CD4-positive, alpha-beta memory T cell (primary cell): ENCODE measurements at regions of chr1 and their contacts with region 1.

Region 1: GRCh38 chr1:161225534-161226319 is at the start of gene TOMM40L:
- DNase-seq: peak; percentile 85 to 97 (median 95)
- H3K4me3 ChIP-seq: peak within 1 kb of the TSS; percentile 67 to 91
- H3K4me3 Mint-ChIP-seq: peak within 1 kb of the TSS; percentile 96 to 100 (median 98)
- H3K27ac ChIP-seq: peak within 1 kb of the TSS; percentile 63
- H3K27ac Mint-ChIP-seq: peak within 1 kb of the TSS; percentile 89 to 98 (median 97)
- H3K4me1 ChIP-seq: peaks cover 28% of the 10 kb centered on the region
- H3K4me1 Mint-ChIP-seq: peaks cover 20 to 37% (median 29%) of the 10 kb centered on the region in 4 donors
- H3K27me3 ChIP-seq: no peaks in the 10 kb centered on the region
- H3K27me3 Mint-ChIP-seq: no peaks in the 10 kb centered on the region
- total RNA-seq, gene TOMM40L: 8.2 to 8.8 TPM

Region 2: GRCh38 chr1:161153679-161154426 is 71.9 kb before region 1 on chr1 and contains the start of gene UFC1:
- CTCF ChIA-PET with region 1: interaction called, 9 read pairs
- POLR2A ChIA-PET with region 1: interaction called, 15 read pairs
- intact Hi-C with region 1: no loop called
- DNase-seq: peak; percentile 87 to 93 (median 90)
- H3K4me3 ChIP-seq: peak within 1 kb of the TSS; percentile 37 to 100
- H3K4me3 Mint-ChIP-seq: peak within 1 kb of the TSS; percentile 96 to 100 (median 99)
- H3K27ac ChIP-seq: peak within 1 kb of the TSS; percentile 99
- H3K27ac Mint-ChIP-seq: peak within 1 kb of the TSS; percentile 99 to 100 (median 100)
- H3K4me1 ChIP-seq: peaks cover 23% of the 10 kb centered on the region
- H3K4me1 Mint-ChIP-seq: peaks cover 23 to 46% (median 32%) of the 10 kb centered on the region in 4 donors
- H3K27me3 ChIP-seq: no peaks in the 10 kb centered on the region
- H3K27me3 Mint-ChIP-seq: no peaks in the 10 kb centered on the region
- total RNA-seq, gene UFC1: 87.2 to 87.4 TPM

Region 3: DNA sequence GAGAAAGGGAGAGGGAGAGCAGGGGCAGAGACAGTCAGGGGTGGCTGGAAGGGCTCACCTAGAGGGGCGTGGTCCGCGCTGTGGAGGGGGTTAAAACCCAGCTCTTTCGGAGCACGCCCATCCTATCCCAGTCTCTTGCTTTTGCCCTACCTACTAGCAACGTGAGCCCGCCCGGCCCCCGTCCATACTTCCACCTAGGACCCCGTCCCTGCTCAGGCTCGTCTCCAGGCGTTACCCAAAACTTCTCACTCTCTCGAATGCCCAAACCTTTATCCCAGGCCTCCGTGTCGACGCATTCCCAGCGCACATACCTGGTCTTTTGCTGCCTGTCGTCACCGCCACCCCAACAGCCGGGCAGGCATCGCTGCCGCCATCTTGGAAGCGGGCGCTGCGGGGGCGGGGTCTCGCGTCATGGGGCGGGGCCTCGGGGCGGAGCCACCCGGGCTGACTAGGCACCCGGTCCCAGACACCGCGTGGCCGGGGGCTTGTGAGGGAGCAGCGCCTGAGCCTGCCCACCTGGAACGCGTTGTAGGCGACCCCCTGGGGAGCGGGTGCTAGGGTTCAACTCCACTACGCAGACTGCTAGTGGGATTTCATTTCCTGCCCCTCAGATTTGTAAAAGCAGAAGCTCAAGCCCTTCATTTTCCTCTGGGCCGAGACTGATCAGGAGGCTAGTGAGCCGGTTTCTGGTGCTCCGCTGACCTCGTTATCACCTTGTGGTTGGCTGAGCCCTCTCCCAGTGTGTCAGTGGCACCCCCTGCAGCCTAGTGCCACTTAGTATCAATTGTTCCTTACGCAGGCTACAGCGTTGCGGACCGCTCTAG is 48.4 kb before region 1 on chr1 and contains the start of gene B4GALT3:
- CTCF ChIA-PET with region 1: interaction called, 106 read pairs
- POLR2A ChIA-PET with region 1: interaction called, 54 read pairs
- intact Hi-C with region 1: loop called (anchors 1 kb)
- DNase-seq: peak; percentile 89 to 94 (median 90)
- H3K4me3 ChIP-seq: peak within 1 kb of the TSS; percentile 90 to 97
- H3K4me3 Mint-ChIP-seq: peak within 1 kb of the TSS; percentile 98 to 100 (median 100)
- H3K27ac ChIP-seq: peak within 1 kb of the TSS; percentile 85
- H3K27ac Mint-ChIP-seq: peak within 1 kb of the TSS; percentile 95 to 100 (median 99)
- H3K4me1 ChIP-seq: peaks cover 56% of the 10 kb centered on the region
- H3K4me1 Mint-ChIP-seq: peaks cover 45 to 85% (median 68%) of the 10 kb centered on the region in 4 donors
- H3K27me3 ChIP-seq: no peaks in the 10 kb centered on the region
- H3K27me3 Mint-ChIP-seq: no peaks in the 10 kb centered on the region
- total RNA-seq, gene B4GALT3: 64.6 to 71.5 TPM

Region 4: GRCh38 chr1:161201828-161202725 is 23.6 kb before region 1 on chr1 and contains the start of gene NDUFS2:
- CTCF ChIA-PET with region 1: interaction called, 131 read pairs
- POLR2A ChIA-PET with region 1: interaction called, 112 read pairs
- intact Hi-C with region 1: loop called (anchors 1 kb)
- DNase-seq: peak; percentile 91 to 98 (median 94)
- H3K4me3 ChIP-seq: peak within 1 kb of the TSS; percentile 85 to 98
- H3K4me3 Mint-ChIP-seq: peak within 1 kb of the TSS; percentile 95 to 98 (median 96)
- H3K27ac ChIP-seq: peak within 1 kb of the TSS; percentile 96
- H3K27ac Mint-ChIP-seq: peak within 1 kb of the TSS; percentile 94 to 99 (median 99)
- H3K4me1 ChIP-seq: peaks cover 66% of the 10 kb centered on the region
- H3K4me1 Mint-ChIP-seq: peaks cover 32 to 68% (median 56%) of the 10 kb centered on the region in 4 donors
- H3K27me3 ChIP-seq: no peaks in the 10 kb centered on the region
- H3K27me3 Mint-ChIP-seq: peaks cover 0 to 1% of the 10 kb centered on the region in 2 donors
- total RNA-seq, gene NDUFS2: 89.9 to 100 TPM

Region 5: GRCh38 chr1:161305867-161306519 is 80.3 kb after region 1 on chr1:
- CTCF ChIA-PET with region 1: interaction called, 42 read pairs
- POLR2A ChIA-PET with region 1: interaction called, 29 read pairs
- intact Hi-C with region 1: loop called (anchors 1 kb)
- DNase-seq: peak; percentile 89 to 92 (median 90)
- H3K4me3 ChIP-seq: peak overlapping the region; percentile 48 to 86
- H3K4me3 Mint-ChIP-seq: peak overlapping the region; percentile 89 to 100 (median 97)
- H3K27ac ChIP-seq: peak overlapping the region; percentile 77
- H3K27ac Mint-ChIP-seq: peak overlapping the region; percentile 91 to 99 (median 96)
- H3K4me1 ChIP-seq: peaks cover 29% of the 10 kb centered on the region
- H3K4me1 Mint-ChIP-seq: peaks cover 17 to 41% (median 29%) of the 10 kb centered on the region in 4 donors
- H3K27me3 ChIP-seq: no peaks in the 10 kb centered on the region
- H3K27me3 Mint-ChIP-seq: no peaks in the 10 kb centered on the region

Region 6: DNA sequence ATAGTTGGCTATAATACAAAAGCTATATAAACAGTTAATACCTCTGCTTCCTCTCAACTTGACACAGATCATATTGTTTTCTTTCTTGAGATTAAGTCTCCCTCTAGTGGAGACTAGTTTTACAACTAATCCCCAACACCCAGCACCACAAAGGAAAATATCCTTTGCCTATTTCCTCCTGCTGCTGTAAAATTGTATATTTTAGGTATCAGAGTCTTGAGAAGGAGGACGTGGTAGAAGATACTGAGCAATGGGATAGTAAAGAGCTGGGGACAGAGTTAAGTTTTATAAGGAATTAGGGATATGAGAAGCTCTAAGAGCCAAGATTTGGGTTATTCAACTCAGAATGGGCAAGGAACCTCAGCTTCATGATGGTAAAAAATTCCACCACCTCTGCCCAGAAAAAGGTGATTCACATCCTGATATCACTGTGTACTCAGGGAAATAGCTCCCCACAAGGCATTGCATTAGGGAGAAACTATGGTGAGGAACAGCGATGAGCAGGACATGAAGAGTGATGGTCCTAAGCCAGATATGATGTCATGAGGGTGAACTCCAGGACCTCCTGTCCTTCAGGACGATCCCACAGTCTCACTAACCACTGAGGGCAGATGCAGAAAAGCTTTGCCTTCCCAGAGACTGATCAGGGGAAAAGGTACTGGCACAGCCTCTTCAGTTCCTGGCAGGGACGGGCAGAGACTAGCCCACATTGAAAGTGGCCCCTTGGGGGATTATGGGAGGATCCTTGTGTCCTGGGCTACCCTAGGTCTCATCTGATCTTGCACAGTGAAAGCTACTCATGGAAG is 156.7 kb after region 1 on chr1:
- CTCF ChIA-PET with region 1: interaction called, 245 read pairs
- POLR2A ChIA-PET with region 1: interaction called, 5 read pairs
- intact Hi-C with region 1: loop called (anchors 1 kb)
- DNase-seq: peak in 4 of 5 donors; percentile 48 to 61 (median 56)
- H3K4me3 ChIP-seq: no peak overlapping the region
- H3K4me3 Mint-ChIP-seq: no peak overlapping the region
- H3K27ac ChIP-seq: no peak overlapping the region
- H3K27ac Mint-ChIP-seq: peak overlapping the region in 3 of 7 donors; percentile 3 to 76 (median 7)
- H3K4me1 ChIP-seq: peaks cover 17% of the 10 kb centered on the region
- H3K4me1 Mint-ChIP-seq: peaks cover 7 to 14% (median 13%) of the 10 kb centered on the region in 4 donors
- H3K27me3 ChIP-seq: no peaks in the 10 kb centered on the region
- H3K27me3 Mint-ChIP-seq: no peaks in the 10 kb centered on the region